ENCODE measurements at regions of chr11 and their contacts with region 1.

Region 1: DNA sequence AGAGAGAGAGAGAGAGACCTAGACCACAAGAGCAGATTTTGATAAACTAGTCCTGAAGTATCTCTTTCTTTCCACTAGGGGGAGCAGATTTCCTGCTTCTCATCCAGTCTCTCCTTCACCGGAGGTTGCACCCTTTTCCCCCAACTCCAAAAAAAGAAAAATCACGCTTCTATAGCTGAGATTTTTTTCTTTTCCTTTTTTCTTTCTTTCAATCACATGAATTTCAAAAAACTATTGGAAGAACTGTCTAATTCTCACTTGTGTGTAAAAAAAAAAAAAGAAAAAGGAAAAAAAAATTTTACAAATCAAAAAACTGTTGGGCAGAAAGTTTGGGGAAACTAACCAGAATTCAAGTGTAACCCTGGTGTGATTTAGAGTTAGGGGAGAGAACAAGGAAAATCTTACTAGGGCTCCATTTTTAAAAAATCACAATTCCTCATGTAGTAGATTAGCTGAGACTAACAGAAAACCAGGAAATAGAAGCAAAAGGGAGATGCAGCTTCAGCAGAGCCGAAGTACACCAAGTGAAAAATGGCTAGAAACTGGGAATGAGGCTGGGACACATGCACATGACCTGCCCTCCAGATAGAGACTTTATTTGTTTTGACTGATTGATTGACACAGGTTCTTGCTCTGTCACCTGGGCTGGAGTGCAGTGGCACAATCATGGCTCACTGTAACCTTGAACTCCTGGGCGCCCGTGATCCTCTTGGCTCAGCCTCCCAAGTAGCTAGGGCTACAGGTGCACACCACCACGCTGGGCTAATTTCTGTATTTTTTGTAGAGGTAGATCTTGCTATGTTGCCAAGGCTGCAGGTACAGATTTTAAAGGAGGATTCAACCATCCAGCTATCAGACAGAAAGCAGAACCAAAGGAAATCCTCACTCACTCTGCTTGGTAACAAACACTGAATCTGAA is 27.1 kb downstream of the SDHD start:
- H3K4me3 ChIP-seq: no peak overlapping the region
- H3K27ac ChIP-seq: no peak overlapping the region
- H3K4me1 ChIP-seq: no peaks in the 10 kb centered on the region
- CTCF ChIP-seq: no peak

Region 2: DNA sequence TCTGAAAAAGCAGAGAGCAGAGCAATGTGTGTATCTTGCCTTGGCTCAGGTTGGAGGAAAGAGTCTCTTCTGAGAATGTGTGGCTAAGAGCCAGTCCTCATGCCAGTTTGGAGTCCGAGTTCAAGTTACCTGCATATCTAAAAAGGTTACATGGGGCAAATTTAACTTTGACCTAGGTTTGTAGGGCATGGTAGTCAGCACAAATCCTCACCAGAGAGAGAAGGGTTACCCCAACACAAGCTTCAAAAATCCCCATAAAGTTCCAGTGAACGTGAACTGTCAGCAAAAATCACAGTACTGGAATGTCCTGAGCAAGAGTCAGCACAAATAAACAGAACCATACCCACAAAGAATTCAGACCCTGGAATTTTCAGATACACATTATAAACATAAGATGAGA is 13.3 kb before region 1 on chr11:
- CTCF ChIA-PET with region 1: interaction called, 36 read pairs
- POLR2A ChIA-PET with region 1: no interaction called
- H3K4me3 ChIP-seq: no peak overlapping the region
- H3K27ac ChIP-seq: no peak overlapping the region
- H3K4me1 ChIP-seq: no peaks in the 10 kb centered on the region
- CTCF ChIP-seq: no peak

Region 3: DNA sequence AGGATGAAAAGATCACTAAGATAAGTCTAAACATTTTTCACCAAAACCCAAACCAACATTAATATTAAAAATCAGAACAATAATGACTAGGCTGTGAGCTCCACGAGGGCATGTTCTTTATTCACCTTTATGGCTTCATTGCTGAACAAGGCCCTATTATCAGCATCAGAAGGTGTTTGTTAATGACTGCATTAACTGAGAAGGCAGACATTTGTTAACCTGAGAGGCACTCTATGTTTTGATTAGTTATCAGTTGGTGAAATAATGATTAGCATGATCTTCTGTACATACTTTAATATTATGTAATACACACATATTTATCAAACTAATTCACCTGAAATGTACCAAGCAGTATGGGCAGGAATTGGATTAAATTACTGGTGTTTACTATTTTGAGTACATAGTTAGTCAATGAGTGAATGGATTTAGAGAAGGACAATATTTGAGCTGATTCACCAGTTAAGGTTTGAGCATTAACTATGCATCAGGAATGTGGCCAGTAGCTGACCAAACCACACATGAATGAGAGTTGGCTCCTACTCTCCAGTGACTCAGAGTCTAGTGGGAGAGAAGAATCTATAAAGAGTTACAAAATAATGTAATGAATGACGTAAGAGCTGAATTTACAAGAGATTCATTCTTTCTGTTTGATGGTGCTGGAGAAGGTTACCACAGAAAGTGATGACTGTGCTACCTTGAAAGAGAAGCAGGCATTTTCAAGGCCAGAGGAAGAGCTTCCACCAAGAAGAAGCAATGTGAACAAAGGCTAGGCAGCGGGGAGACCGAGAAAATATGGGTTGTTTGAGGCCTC is 43.4 kb after region 1 on chr11:
- CTCF ChIA-PET with region 1: interaction called, 11 read pairs
- POLR2A ChIA-PET with region 1: interaction called, 3 read pairs
- H3K4me3 ChIP-seq: no peak overlapping the region
- H3K27ac ChIP-seq: no peak overlapping the region
- H3K4me1 ChIP-seq: no peaks in the 10 kb centered on the region
- CTCF ChIP-seq: no peak

Region 4: GRCh38 chr11:112166546-112166945 is 52.7 kb after region 1 on chr11:
- CTCF ChIA-PET with region 1: interaction called, 11 read pairs
- POLR2A ChIA-PET with region 1: no interaction called
- H3K4me3 ChIP-seq: no peak overlapping the region
- H3K27ac ChIP-seq: no peak overlapping the region
- H3K4me1 ChIP-seq: no peaks in the 10 kb centered on the region
- CTCF ChIP-seq: no peak

Region 5: GRCh38 chr11:112174789-112175598 is 61.2 kb after region 1 on chr11 and contains the start of gene BCO2:
- CTCF ChIA-PET with region 1: interaction called, 64 read pairs
- POLR2A ChIA-PET with region 1: no interaction called
- H3K4me3 ChIP-seq: peak within 1 kb of the TSS; percentile 2
- H3K27ac ChIP-seq: no peak within 1 kb of the TSS
- H3K4me1 ChIP-seq: peaks cover 3% of the 10 kb centered on the region; the same call in 1 of the 2 replicates
- CTCF ChIP-seq: peak; percentile 70

Region 6: GRCh38 chr11:112280268-112281126 is 166.7 kb after region 1 on chr11:
- CTCF ChIA-PET with region 1: interaction called, 70 read pairs
- POLR2A ChIA-PET with region 1: interaction called, 5 read pairs
- H3K4me3 ChIP-seq: peak overlapping the region; percentile 26
- H3K27ac ChIP-seq: no peak overlapping the region
- H3K4me1 ChIP-seq: no peaks in the 10 kb centered on the region
- CTCF ChIP-seq: peak; percentile 76